ENCODE measurements at regions of chr11 and their contacts with region 1.

Region 1: GRCh38 chr11:46616998-46617675 is at the starts of genes ATG13 and HARBI1:
- DNase-seq: peak; percentile 95
- H3K4me3 Mint-ChIP-seq: peak within 1 kb of the TSS; percentile 93
- H3K27ac Mint-ChIP-seq: peak within 1 kb of the TSS; percentile 98
- H3K4me1 Mint-ChIP-seq: peaks cover 39% of the 10 kb centered on the region
- H3K27me3 Mint-ChIP-seq: no peaks in the 10 kb centered on the region
- total RNA-seq, gene ATG13: 49.9 to 51.0 TPM
- total RNA-seq, gene HARBI1: 3.1 TPM

Region 2: GRCh38 chr11:46392421-46393230 is 224.5 kb before region 1 on chr11:
- CTCF ChIA-PET with region 1: interaction called, 7 read pairs
- POLR2A ChIA-PET with region 1: no interaction called
- intact Hi-C with region 1: loop called (anchors 1 kb)
- DNase-seq: peak; percentile 87
- H3K4me3 Mint-ChIP-seq: peak overlapping the region; percentile 71
- H3K27ac Mint-ChIP-seq: no peak overlapping the region
- H3K4me1 Mint-ChIP-seq: peaks cover 27% of the 10 kb centered on the region
- H3K27me3 Mint-ChIP-seq: peaks cover 37% of the 10 kb centered on the region

Region 3: GRCh38 chr11:46417711-46418110 is 199.4 kb before region 1 on chr11:
- CTCF ChIA-PET with region 1: no interaction called
- POLR2A ChIA-PET with region 1: no interaction called
- intact Hi-C with region 1: no loop called
- DNase-seq: no peak
- H3K4me3 Mint-ChIP-seq: no peak overlapping the region
- H3K27ac Mint-ChIP-seq: no peak overlapping the region
- H3K4me1 Mint-ChIP-seq: no peaks in the 10 kb centered on the region
- H3K27me3 Mint-ChIP-seq: no peaks in the 10 kb centered on the region

Region 4: GRCh38 chr11:46489661-46490560 is 127.2 kb before region 1 on chr11:
- CTCF ChIA-PET with region 1: interaction called, 36 read pairs
- POLR2A ChIA-PET with region 1: no interaction called
- intact Hi-C with region 1: no loop called
- DNase-seq: peak; percentile 35
- H3K4me3 Mint-ChIP-seq: no peak overlapping the region
- H3K27ac Mint-ChIP-seq: no peak overlapping the region
- H3K4me1 Mint-ChIP-seq: peaks cover 2% of the 10 kb centered on the region
- H3K27me3 Mint-ChIP-seq: no peaks in the 10 kb centered on the region

Region 5: GRCh38 chr11:46560300-46560991 is 56.7 kb before region 1 on chr11:
- CTCF ChIA-PET with region 1: interaction called, 5 read pairs
- POLR2A ChIA-PET with region 1: interaction called, 3 read pairs
- intact Hi-C with region 1: loop called (anchors 2 kb)
- DNase-seq: peak; percentile 21
- H3K4me3 Mint-ChIP-seq: peak overlapping the region; percentile 79
- H3K27ac Mint-ChIP-seq: peak overlapping the region; percentile 91
- H3K4me1 Mint-ChIP-seq: peaks cover 62% of the 10 kb centered on the region
- H3K27me3 Mint-ChIP-seq: no peaks in the 10 kb centered on the region

Region 6: DNA sequence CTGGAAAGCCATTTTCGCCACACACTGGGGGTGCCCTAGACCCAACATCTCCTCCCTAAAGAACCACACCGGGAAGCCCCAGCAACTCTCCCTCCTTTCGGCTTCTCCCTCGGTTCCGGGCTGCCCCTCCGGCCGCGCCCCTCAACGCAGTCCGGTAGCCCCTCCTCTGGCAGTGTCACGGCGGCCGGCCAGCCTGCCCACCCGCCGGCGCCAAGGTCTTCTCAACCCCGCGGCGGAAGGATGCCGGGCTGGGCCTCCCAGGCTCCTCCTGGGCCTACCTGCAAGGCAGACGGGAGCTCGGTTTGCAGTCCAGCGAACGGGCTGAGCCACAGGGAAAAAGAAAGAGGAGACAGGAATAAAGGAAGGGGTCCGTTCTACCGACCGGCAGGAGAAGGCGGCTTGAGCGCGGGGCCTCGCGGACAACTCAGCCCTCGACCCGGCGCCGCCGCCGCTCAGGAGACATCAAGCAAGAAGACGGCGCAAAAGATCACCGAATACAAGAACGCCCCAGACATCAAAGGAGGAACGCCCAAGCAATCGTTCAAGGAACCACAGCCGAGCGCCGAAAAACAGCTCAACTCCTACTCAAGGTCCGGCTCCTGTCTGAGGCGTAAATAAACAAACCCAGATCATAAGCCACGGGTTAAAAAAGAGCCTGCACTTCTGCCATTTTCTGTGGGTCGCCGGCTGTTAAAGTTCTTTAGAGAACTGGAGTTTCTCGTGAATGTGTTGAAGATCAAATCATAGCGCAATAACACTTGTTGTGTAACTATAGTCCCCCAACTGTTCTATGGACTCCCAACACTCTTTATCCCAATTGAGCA is 23.4 kb before region 1 on chr11 and contains the start of gene AMBRA1:
- CTCF ChIA-PET with region 1: interaction called, 9 read pairs
- POLR2A ChIA-PET with region 1: interaction called, 8 read pairs
- intact Hi-C with region 1: loop called (anchors 1 kb)
- DNase-seq: peak; percentile 94
- H3K4me3 Mint-ChIP-seq: peak within 1 kb of the TSS; percentile 91
- H3K27ac Mint-ChIP-seq: peak within 1 kb of the TSS; percentile 78
- H3K4me1 Mint-ChIP-seq: peaks cover 43% of the 10 kb centered on the region
- H3K27me3 Mint-ChIP-seq: no peaks in the 10 kb centered on the region
- total RNA-seq, gene AMBRA1: 22.5 to 24.1 TPM

Region 7: DNA sequence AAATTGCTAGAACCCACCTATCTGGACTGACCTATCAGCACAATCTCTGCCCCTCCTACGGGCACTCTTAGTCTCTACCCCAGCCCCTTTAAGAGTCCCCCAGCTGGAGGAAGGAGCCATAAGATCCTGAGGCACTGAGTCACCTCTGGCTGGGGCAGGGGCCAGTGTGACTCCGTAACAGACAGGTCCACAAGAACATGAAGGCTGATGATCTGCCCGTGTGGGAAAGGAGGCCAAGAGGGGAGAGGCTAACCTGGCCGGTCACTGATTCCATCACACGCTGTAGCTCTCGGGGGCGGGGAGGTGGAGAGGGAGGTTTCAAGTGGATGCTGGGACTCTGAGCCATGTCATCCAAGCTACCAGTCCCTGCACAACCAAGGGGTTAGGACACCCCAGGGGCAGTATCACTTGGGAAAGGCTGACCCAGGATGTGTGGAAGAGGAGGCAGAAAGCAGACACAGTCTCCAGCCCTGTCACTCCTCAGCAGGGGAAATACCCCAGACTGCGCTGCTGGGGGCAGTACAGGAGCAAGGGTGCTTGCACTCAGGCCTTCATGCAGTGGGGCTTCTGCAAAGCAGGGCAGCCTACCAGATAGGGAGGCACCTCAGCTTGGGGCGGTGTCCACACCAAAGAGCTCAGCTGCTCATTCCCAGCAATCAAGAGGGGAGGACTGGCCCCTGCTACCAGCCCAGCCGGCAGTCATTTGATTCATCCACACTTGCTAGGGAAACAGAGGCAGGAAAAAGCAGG is 61.0 kb after region 1 on chr11:
- CTCF ChIA-PET with region 1: no interaction called
- POLR2A ChIA-PET with region 1: no interaction called
- intact Hi-C with region 1: no loop called
- DNase-seq: no peak
- H3K4me3 Mint-ChIP-seq: no peak overlapping the region
- H3K27ac Mint-ChIP-seq: no peak overlapping the region
- H3K4me1 Mint-ChIP-seq: peaks cover 42% of the 10 kb centered on the region
- H3K27me3 Mint-ChIP-seq: no peaks in the 10 kb centered on the region

Region 8: GRCh38 chr11:46700241-46701077 is 83.3 kb after region 1 on chr11 and contains the starts of genes ARHGAP1 and ZNF408:
- CTCF ChIA-PET with region 1: interaction called, 6 read pairs
- POLR2A ChIA-PET with region 1: interaction called, 6 read pairs
- intact Hi-C with region 1: loop called (anchors 1 kb)
- DNase-seq: peak; percentile 100
- H3K4me3 Mint-ChIP-seq: peak within 1 kb of the TSS; percentile 92
- H3K27ac Mint-ChIP-seq: peak within 1 kb of the TSS; percentile 95
- H3K4me1 Mint-ChIP-seq: peaks cover 50% of the 10 kb centered on the region
- H3K27me3 Mint-ChIP-seq: no peaks in the 10 kb centered on the region
- total RNA-seq, gene ARHGAP1: 45.8 to 46.2 TPM
- total RNA-seq, gene ZNF408: 9.4 to 10.7 TPM

Measured in activated CD4-positive, alpha-beta memory T cell treated with anti-CD3 and anti-CD28 coated beads for 36 hours (primary cell).